Motor neuron (in vitro differentiated cells): ENCODE measurements at regions of chr14 and their contacts with region 1.

Region 1: GRCh38 chr14:88492272-88493089 is 62.3 kb downstream of the PTPN21 start:
- ATAC-seq: peak in 7 of 8 experiments; percentile 17 to 97 (median 83)
- H3K4me3 ChIP-seq: no peak overlapping the region
- H3K27ac ChIP-seq: no peak overlapping the region
- H3K4me1 ChIP-seq: no peaks in the 10 kb centered on the region

Region 2: GRCh38 chr14:88551094-88551870 is 58.8 kb after region 1 on chr14:
- in situ Hi-C with region 1: loop called in 1 of 9 experiments (anchors 10 kb)
- ATAC-seq: peak; percentile 76 to 85 (median 78)
- H3K4me3 ChIP-seq: peak overlapping the region; percentile 51 to 71 (median 64)
- H3K27ac ChIP-seq: peak overlapping the region; percentile 43 to 60
- H3K4me1 ChIP-seq: peaks cover 4 to 15% of the 10 kb centered on the region in 2 donors